ENCODE measurements at regions of chr10 and their contacts with region 1.

Region 1: GRCh38 chr10:131874991-131875451 is 25.8 kb upstream of the PPP2R2D start:
- DNase-seq: no peak
- H3K4me3 ChIP-seq: peak overlapping the region in 1 of 4 donors; percentile 18
- H3K27ac ChIP-seq: no peak overlapping the region
- H3K4me1 ChIP-seq: peaks cover 6 to 9% (median 8%) of the 10 kb centered on the region in 4 donors
- H3K27me3 ChIP-seq: peaks cover 0 to 51% (median 5%) of the 10 kb centered on the region in 4 donors
- CTCF ChIP-seq: peak; percentile 57 to 67 (median 62)
- EP300 ChIP-seq: no peak
- POLR2A ChIP-seq: no peak

Region 2: DNA sequence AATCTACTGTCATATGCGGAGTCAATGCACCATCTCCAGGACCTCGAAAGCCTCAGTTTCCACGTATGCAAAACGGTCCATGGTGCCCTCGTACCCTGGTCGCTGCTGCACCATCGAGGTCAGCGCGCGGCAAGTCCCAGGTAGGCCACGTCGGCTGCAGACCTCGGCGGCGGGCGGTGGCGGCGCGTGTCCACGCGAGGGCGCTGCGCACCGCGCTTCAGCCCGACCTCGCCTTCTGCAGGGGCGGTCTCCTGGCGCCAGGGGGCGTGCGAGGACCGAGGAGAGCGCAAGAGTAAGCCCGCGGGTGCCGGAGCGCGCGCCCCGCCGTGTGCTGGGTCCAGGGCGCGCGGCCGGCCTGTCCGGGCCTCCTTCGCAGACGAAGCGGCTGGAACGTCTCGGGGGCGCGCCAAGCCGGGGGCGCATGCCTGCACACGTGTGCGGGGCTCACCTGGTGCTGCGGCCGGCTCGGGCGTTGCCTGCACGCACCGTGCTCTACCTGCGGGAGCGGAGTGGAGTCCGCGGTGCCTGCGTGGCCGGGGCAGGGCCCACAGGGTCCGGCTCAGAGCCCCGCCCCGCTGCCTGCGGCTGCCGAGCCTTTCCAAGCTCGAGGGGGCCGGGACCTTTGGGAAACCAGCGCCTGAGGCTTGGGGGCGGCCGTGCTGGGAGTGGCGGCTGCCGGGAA is 1684.8 kb before region 1 on chr10:
- intact Hi-C with region 1: loop called (anchors 5 kb)
- DNase-seq: peak; percentile 94
- H3K4me3 ChIP-seq: peak overlapping the region; percentile 63 to 69 (median 63)
- H3K27ac ChIP-seq: no peak overlapping the region
- H3K4me1 ChIP-seq: peaks cover 14 to 18% (median 16%) of the 10 kb centered on the region in 4 donors
- H3K27me3 ChIP-seq: peaks cover 0 to 33% (median 0%) of the 10 kb centered on the region in 4 donors
- CTCF ChIP-seq: peak in 2 of 3 experiments; percentile 100
- EP300 ChIP-seq: no peak
- POLR2A ChIP-seq: no peak

Region 3: DNA sequence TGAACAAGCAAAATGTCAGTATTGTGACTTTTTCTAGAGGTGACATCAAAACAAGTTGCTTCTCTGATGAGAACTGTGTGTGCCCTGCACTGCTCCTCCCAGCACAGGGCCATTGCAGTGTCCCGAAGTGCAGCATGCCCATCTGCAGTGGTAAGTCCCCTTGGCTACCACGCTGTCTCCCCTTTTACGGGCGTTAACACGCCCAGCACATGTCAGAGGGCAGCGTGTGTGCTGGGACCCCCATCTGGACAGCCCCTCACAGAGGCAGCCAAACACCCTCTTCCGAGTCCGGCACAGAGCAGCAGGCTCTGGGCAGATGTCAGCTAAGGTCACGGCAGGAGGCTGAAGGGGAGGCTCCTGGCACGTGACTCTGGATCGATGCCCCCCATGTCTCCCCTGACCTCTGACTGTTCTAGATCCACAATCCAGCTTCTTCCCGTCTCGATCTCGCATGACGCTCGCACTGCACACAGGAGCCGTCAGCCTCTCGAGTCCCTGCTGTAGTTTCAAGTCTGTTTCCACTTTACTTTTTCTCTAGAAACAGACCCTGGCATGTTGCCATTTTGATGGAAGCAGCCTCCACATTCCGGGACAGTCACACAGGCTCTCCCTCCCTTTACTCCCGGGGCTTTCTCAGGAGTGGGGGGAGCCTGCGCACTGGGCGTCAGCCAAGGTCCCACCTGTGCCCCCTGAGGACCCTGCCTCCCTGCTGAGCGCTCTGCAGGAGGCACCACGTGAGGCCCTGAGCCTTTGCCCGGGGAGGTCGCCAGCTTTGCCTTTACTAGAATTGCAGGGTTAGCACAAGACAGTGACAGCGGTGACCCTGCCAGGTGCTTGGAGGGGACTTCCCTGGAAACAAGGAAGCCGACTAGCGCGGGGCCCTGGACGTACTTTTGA is 697.3 kb before region 1 on chr10:
- intact Hi-C with region 1: no loop called
- DNase-seq: no peak
- H3K4me3 ChIP-seq: no peak overlapping the region
- H3K27ac ChIP-seq: no peak overlapping the region
- H3K4me1 ChIP-seq: no peaks in the 10 kb centered on the region
- H3K27me3 ChIP-seq: peaks cover 0 to 54% (median 0%) of the 10 kb centered on the region in 4 donors
- CTCF ChIP-seq: no peak
- EP300 ChIP-seq: no peak
- POLR2A ChIP-seq: no peak

Region 4: DNA sequence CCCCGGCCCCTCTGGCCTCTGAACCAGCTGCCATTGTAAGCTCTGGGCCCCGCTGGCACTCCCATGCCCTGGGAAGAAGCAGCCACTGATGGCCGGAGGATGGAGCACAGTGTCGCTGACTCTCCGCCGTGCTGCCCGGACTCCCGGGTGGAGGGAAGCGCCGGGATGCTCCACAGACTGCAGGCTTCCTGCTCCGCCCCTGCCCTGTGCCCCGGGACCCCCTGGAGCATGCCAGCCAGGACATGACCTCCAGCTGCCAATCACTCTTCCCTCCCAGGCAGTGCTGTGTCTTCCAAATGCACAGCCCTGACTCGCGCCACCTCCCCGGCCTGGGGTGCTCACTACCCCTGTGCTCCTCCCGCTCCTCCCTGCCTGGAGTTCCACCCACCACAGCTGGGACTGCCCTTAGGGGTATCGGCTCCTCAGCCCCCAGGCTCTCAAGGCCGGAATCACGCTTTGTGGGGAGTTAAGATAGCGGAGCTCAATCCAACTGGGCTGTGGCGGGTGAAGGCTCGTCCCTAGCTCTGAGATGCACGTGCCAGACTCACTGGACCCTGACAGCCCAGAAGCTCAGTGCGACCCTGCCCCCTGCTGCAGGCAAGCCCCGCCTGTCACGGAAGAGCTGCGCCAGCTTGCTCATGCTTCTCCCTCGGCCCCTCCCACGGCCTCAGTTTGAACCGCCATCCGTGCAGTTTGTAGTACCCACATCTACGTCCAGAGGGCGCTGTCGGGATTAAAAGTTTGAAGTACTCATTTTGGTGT is 421.2 kb before region 1 on chr10:
- intact Hi-C with region 1: loop called (anchors 10 kb)
- DNase-seq: no peak
- H3K4me3 ChIP-seq: peak overlapping the region; percentile 28 to 46 (median 32)
- H3K27ac ChIP-seq: no peak overlapping the region
- H3K4me1 ChIP-seq: peaks cover 0 to 10% (median 8%) of the 10 kb centered on the region in 4 donors
- H3K27me3 ChIP-seq: peaks cover 0 to 66% (median 16%) of the 10 kb centered on the region in 4 donors
- CTCF ChIP-seq: peak; percentile 65 to 93 (median 71)
- EP300 ChIP-seq: no peak
- POLR2A ChIP-seq: no peak

Region 5: DNA sequence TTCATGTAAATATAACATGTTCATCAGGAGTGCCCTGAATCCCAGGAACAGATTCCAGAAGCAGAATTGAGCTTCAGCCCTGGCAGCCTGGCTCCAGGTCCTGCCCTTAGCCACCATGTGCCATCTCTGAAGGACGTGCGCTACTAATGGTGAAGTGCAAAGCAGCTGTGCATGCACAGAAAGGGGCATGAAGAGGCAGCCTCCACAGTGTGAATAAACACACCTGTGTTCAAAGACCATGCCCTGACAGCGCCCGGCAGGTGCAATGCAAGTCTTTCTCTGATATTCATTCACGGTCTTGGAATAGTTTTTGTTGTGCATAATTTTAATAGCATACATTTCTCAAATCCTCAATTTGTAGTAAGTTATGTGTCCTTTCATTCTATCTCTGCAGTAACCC is 313.1 kb before region 1 on chr10:
- intact Hi-C with region 1: no loop called
- DNase-seq: no peak
- H3K4me3 ChIP-seq: no peak overlapping the region
- H3K27ac ChIP-seq: no peak overlapping the region
- H3K4me1 ChIP-seq: no peaks in the 10 kb centered on the region
- H3K27me3 ChIP-seq: peaks cover 0 to 54% (median 8%) of the 10 kb centered on the region in 4 donors
- CTCF ChIP-seq: no peak
- EP300 ChIP-seq: no peak
- POLR2A ChIP-seq: no peak

Region 6: GRCh38 chr10:131760416-131761166 is 114.4 kb before region 1 on chr10:
- intact Hi-C with region 1: no loop called
- DNase-seq: no peak
- H3K4me3 ChIP-seq: no peak overlapping the region
- H3K27ac ChIP-seq: no peak overlapping the region
- H3K4me1 ChIP-seq: no peaks in the 10 kb centered on the region
- H3K27me3 ChIP-seq: peaks cover 0 to 14% (median 0%) of the 10 kb centered on the region in 4 donors
- CTCF ChIP-seq: no peak
- EP300 ChIP-seq: no peak
- POLR2A ChIP-seq: no peak

Measured in esophagus muscularis mucosa (tissue), 4 donors.